CD4-positive, alpha-beta T cell (primary cell): ENCODE measurements at regions of chr4 and their contacts with region 1.

Region 1: DNA sequence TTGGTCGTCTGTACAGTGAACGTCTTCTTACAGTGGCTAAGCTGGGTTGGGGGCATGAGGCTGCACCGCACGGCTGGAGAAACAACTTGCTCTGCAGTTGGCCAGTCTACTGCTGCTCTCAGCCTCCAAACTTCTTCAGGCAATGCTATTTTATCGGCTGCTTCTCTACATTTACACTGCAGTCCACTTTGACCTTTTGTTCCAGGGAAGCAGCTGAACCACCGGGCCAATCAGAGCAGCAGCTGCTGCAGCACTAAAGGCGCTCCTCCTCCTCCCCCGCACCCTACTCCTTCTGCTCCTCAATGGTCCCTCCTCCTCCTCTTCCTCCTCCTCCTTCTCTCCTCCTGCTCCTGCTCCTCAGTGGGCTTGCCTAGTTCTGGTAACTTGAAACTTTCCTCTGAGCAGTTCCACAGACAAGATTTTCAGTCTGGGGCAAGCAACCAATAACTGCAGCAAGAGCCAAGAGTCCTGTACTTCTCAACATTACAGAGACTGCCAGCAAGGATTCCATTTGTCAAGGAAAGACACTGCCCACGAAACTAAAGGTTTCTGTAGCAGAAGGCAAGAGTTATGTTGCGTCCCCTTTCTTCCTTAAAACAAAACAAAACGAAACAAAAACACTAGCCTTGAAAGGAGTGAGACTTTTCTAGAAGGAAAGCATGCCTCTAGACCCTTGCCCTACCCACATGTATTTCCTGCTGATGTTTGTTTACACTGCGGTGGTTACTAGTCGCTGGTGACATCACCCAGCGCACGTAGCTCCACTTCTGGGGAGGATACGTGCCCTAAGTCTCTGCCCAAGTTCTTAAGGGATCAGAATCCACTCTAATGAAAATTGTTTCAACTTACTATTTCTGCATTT is 125.7 kb upstream of the NAP1L5 start:
- DNase-seq: peak; percentile 36 to 94 (median 61)
- ATAC-seq: peak; percentile 92
- H3K4me3 ChIP-seq: peak overlapping the region; percentile 61
- H3K4me3 Mint-ChIP-seq: peak overlapping the region; percentile 91
- H3K27ac ChIP-seq: peak overlapping the region; percentile 78 to 90
- H3K27ac Mint-ChIP-seq: peak overlapping the region; percentile 97
- H3K4me1 ChIP-seq: peaks cover 6% of the 10 kb centered on the region
- H3K4me1 Mint-ChIP-seq: peaks cover 50% of the 10 kb centered on the region
- H3K27me3 ChIP-seq: no peaks in the 10 kb centered on the region
- H3K27me3 Mint-ChIP-seq: no peaks in the 10 kb centered on the region
- CTCF ChIP-seq: no peak

Region 2: DNA sequence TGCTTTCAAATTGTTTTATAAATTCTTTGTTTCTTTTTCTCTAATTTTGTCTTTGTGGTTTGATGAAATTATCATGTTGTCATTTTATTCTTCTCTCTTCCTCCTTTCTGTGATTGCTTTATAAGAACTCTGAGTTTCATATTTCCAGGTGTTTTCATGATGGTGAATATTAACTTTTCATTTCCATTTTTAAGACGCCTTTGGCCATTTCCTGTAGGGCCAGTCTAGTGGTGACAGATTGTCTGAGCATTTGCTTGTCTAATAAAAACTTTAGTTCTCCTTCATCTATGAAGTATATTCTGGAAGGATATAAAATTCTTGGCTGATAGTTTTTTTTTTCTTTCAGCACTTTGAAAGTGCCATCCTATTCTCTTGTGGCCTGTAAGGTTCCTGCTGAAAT is 105.6 kb after region 1 on chr4:
- CTCF ChIA-PET with region 1: no interaction called
- POLR2A ChIA-PET with region 1: no interaction called
- intact Hi-C with region 1: loop called in 1 of 2 experiments (anchors 5 kb)
- DNase-seq: no peak
- ATAC-seq: no peak
- H3K4me3 ChIP-seq: no peak overlapping the region
- H3K4me3 Mint-ChIP-seq: no peak overlapping the region
- H3K27ac ChIP-seq: no peak overlapping the region
- H3K27ac Mint-ChIP-seq: no peak overlapping the region
- H3K4me1 ChIP-seq: peaks cover 6% of the 10 kb centered on the region
- H3K4me1 Mint-ChIP-seq: peaks cover 29% of the 10 kb centered on the region
- H3K27me3 ChIP-seq: no peaks in the 10 kb centered on the region
- H3K27me3 Mint-ChIP-seq: no peaks in the 10 kb centered on the region
- CTCF ChIP-seq: no peak

Region 3: GRCh38 chr4:88949605-88950004 is 126.3 kb after region 1 on chr4:
- CTCF ChIA-PET with region 1: no interaction called
- POLR2A ChIA-PET with region 1: no interaction called
- intact Hi-C with region 1: loop called in 1 of 2 experiments (anchors 1 kb)
- DNase-seq: peak in 1 of 14 experiments; percentile 32
- ATAC-seq: no peak
- H3K4me3 ChIP-seq: no peak overlapping the region
- H3K4me3 Mint-ChIP-seq: no peak overlapping the region
- H3K27ac ChIP-seq: no peak overlapping the region
- H3K27ac Mint-ChIP-seq: no peak overlapping the region
- H3K4me1 ChIP-seq: peaks cover 3% of the 10 kb centered on the region
- H3K4me1 Mint-ChIP-seq: peaks cover 4% of the 10 kb centered on the region
- H3K27me3 ChIP-seq: no peaks in the 10 kb centered on the region
- H3K27me3 Mint-ChIP-seq: no peaks in the 10 kb centered on the region
- CTCF ChIP-seq: no peak

Region 4: DNA sequence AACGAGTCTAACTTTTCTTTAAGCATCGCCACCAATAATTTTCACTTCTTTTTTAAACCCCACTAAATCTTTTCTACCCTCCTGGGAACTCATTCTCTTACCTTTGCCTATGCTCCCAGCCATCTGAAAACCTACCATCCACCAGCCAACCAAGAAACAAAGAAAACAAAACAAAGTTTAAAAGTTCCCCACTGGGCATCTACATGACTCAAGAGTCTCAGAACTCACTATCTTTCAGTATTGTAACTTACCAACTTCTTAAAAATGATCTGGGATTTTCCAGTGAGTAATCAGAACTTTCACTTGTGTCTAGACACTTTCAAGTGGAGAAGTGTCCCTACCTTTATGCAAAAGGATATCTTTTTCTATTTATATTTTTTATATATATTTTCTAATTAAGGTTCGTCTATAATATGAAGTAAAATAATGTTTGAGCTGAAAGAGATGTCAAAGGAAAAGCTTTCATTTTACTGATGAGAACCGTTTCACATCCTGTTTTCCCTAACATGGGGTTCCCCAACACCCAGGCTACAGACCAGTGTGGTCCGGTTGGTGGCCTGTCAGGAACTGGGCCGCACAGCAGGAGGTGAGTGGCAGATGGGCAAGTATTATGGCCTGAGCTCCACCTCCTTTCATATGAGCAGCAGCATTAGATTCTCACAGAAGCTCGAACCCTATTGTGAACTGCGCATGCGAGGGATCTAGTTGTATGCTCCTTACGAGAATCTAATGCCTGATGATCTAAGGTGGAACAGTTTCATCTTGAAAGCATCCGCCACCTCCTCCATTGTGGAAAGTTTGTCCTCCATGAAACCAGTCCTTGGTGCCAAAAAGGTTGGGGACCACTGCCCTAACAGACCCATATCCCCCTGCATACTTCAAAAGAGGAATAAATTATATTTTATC is 278.2 kb after region 1 on chr4:
- CTCF ChIA-PET with region 1: no interaction called
- POLR2A ChIA-PET with region 1: no interaction called
- intact Hi-C with region 1: loop called in 1 of 2 experiments (anchors 5 kb)
- DNase-seq: peak in 2 of 14 experiments; percentile 24 to 46
- ATAC-seq: no peak
- H3K4me3 ChIP-seq: no peak overlapping the region
- H3K4me3 Mint-ChIP-seq: no peak overlapping the region
- H3K27ac ChIP-seq: no peak overlapping the region
- H3K27ac Mint-ChIP-seq: no peak overlapping the region
- H3K4me1 ChIP-seq: no peaks in the 10 kb centered on the region
- H3K4me1 Mint-ChIP-seq: no peaks in the 10 kb centered on the region
- H3K27me3 ChIP-seq: peaks cover 0 to 2% of the 10 kb centered on the region in 2 experiments
- H3K27me3 Mint-ChIP-seq: peaks cover 10% of the 10 kb centered on the region
- CTCF ChIP-seq: no peak